Common myeloid progenitor, CD34-positive (primary cell): ENCODE measurements at regions of chr9 and their contacts with region 1.

Region 1: GRCh38 chr9:2837915-2838314 is 6.0 kb downstream of the PUM3 start:
- DNase-seq: peak in 2 of 3 donors; percentile 55 to 58
- H3K4me3 ChIP-seq: no peak overlapping the region
- H3K27ac ChIP-seq: no peak overlapping the region
- H3K4me1 ChIP-seq: peaks cover 5 to 17% (median 12%) of the 10 kb centered on the region in 4 experiments
- H3K27me3 ChIP-seq: no peaks in the 10 kb centered on the region

Region 2: DNA sequence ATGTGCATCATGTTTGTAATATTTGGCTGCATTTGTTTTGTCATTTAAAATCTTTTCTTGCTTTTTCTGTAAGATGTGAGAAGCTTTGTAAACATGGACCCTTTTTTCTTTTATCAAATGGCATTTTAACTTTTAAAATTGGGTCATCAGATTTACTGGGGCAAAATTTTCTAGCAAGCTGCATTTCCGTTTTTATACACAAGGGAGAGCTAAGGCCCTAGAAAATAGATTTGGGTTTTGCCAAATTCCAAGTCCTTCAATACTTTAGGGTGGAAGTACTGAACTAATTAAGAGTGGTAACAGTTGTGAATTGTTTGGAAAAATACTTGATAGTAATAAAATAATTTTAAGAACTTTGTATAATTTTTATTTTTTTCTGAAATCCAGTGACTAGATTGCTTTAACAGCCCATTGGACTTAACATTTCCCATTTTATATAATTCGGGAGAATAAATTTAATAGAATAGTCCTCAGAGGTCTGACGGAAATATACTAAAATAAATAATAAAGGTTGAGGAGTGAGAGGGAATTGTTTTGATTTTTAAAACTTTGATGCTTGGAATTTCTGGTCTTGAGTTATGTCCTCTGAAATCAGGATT is 705.3 kb before region 1 on chr9:
- CTCF ChIA-PET with region 1: interaction called, 15 read pairs
- POLR2A ChIA-PET with region 1: no interaction called
- DNase-seq: peak; percentile 39 to 65 (median 59)
- H3K4me3 ChIP-seq: no peak overlapping the region
- H3K27ac ChIP-seq: no peak overlapping the region
- H3K4me1 ChIP-seq: peaks cover 0 to 7% (median 0%) of the 10 kb centered on the region in 4 experiments
- H3K27me3 ChIP-seq: no peaks in the 10 kb centered on the region

Region 3: GRCh38 chr9:2771662-2772061 is 66.3 kb before region 1 on chr9:
- CTCF ChIA-PET with region 1: no interaction called
- POLR2A ChIA-PET with region 1: no interaction called
- DNase-seq: no peak
- H3K4me3 ChIP-seq: no peak overlapping the region
- H3K27ac ChIP-seq: no peak overlapping the region
- H3K4me1 ChIP-seq: no peaks in the 10 kb centered on the region
- H3K27me3 ChIP-seq: no peaks in the 10 kb centered on the region

Region 4: GRCh38 chr9:2868883-2869282 is 31.0 kb after region 1 on chr9:
- CTCF ChIA-PET with region 1: no interaction called
- POLR2A ChIA-PET with region 1: no interaction called
- DNase-seq: no peak
- H3K4me3 ChIP-seq: no peak overlapping the region
- H3K27ac ChIP-seq: no peak overlapping the region
- H3K4me1 ChIP-seq: no peaks in the 10 kb centered on the region
- H3K27me3 ChIP-seq: peaks cover 0 to 4% (median 0%) of the 10 kb centered on the region in 5 experiments